Esophagus muscularis mucosa (tissue), 4 donors: ENCODE measurements at regions of chr19 and their contacts with region 1.

Region 1: GRCh38 chr19:10390652-10391286 is 10.4 kb upstream of the TYK2 start:
- DNase-seq: no peak
- H3K4me3 ChIP-seq: no peak overlapping the region
- H3K27ac ChIP-seq: no peak overlapping the region
- H3K4me1 ChIP-seq: peaks cover 0 to 8% (median 7%) of the 10 kb centered on the region in 4 donors
- H3K27me3 ChIP-seq: peaks cover 0 to 3% (median 0%) of the 10 kb centered on the region in 4 donors
- CTCF ChIP-seq: peak; percentile 74 to 86 (median 82)
- EP300 ChIP-seq: no peak
- POLR2A ChIP-seq: no peak

Region 2: DNA sequence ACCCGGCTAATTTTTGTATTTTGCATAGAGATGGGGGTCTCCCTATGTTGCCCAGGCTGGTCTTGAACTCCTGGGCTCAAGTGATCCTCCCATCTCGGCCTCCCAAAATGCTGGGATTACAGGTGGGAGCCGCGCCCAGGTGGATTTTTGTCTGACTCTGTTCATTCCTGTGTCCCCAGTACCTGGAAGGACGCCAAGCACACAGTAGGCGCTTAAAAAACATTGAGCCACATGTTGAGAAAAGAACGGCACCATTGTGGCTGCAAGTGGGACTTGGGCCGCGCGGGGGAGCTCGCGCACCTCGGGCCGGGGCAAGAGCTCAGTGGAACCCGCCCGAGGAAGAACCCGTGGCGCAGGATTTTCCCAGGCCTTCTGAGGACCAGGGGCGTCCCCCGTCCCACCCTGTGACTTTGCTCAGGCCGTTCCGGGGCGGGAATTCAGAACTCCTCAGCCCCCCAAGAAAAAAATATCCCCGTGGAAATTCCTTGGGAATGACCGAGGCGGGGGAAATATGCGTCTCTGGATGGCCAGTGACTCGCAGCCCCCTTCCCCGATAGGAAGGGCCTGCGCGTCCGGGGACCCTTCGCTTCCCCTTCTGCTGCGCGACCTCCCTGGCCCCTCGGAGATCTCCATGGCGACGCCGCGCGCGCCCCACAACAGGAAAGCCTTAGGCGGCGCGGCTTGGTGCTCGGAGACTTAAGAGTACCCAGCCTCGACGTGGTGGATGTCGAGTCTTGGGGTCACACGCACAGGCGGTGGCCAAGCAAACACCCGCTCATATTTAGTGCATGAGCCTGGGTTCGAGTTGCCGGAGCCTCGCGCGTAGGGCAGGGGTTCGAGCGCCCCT is 121.2 kb before region 1 on chr19:
- intact Hi-C with region 1: loop called (anchors 1 kb)
- DNase-seq: peak; percentile 94
- H3K4me3 ChIP-seq: peak overlapping the region; percentile 46 to 59 (median 50)
- H3K27ac ChIP-seq: peak overlapping the region; percentile 68 to 88 (median 79)
- H3K4me1 ChIP-seq: peaks cover 32 to 57% (median 37%) of the 10 kb centered on the region in 4 donors
- H3K27me3 ChIP-seq: peaks cover 0 to 39% (median 15%) of the 10 kb centered on the region in 4 donors
- CTCF ChIP-seq: peak; percentile 93 to 98 (median 93)
- EP300 ChIP-seq: no peak
- POLR2A ChIP-seq: no peak

Region 3: GRCh38 chr19:10332955-10333757 is 57.6 kb before region 1 on chr19 and contains the start of gene RAVER1:
- intact Hi-C with region 1: no loop called
- DNase-seq: peak; percentile 99
- H3K4me3 ChIP-seq: peak within 1 kb of the TSS; percentile 85 to 95 (median 91)
- H3K27ac ChIP-seq: peak within 1 kb of the TSS; percentile 93 to 97 (median 95)
- H3K4me1 ChIP-seq: peaks cover 27 to 42% (median 35%) of the 10 kb centered on the region in 4 donors
- H3K27me3 ChIP-seq: no peaks in the 10 kb centered on the region
- CTCF ChIP-seq: no peak
- EP300 ChIP-seq: no peak
- POLR2A ChIP-seq: peak; percentile 14
- total RNA-seq, gene RAVER1: 23.7 to 42.2 (median 30.2) TPM